IMR-90 (cell line): ENCODE measurements at regions of chr20 and their contacts with region 1.

Region 1: DNA sequence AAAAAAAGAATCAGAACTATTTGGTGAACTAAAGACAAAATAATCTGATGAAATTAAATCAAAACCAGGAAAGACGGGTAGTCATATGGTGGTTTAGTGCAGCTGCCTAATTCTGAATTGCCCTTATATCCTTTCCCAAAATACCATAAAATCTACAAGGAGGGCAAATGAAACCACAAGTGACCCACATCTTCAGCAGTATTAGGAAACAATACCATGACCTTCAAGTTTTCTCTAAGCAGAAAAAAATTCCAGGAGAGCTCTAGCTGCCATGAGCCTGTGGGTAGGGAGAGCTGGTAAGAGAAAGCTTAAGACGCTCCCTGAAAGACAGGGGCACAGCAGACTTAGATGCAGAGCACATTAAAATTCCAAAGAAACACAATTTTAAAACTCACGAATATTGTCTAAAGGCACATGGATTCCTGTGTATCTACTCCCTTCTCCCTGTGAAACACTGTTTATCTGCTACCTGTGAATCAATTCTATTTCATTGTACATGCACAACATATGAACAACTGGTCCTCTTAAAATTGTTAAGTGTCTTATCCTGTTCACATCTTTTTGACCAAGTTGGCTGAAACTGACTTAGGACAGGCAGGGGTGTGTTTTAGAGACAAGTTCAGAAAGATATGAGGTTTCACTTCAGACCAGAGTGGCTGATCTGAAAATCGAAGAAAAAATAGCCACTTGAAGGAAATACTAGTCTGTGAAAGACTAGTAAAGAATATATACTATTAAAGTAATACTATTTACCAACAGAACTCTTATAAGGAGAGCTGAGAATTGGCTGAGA is 153.6 kb upstream of the SHLD1 start:
- DNase-seq: no peak
- ATAC-seq: no peak
- H3K4me3 ChIP-seq: no peak overlapping the region
- H3K27ac ChIP-seq: no peak overlapping the region
- H3K4me1 ChIP-seq: peaks cover 5% of the 10 kb centered on the region
- H3K27me3 ChIP-seq: no peaks in the 10 kb centered on the region
- CTCF ChIP-seq: no peak
- POLR2A ChIP-seq: no peak
- RAD21 ChIP-seq: no peak

Region 2: GRCh38 chr20:5529331-5530148 is 67.1 kb before region 1 on chr20:
- CTCF ChIA-PET with region 1: no interaction called
- POLR2A ChIA-PET with region 1: no interaction called
- dilution Hi-C with region 1: no loop called
- in situ Hi-C with region 1: no loop called
- intact Hi-C with region 1: no loop called
- DNase-seq: peak; percentile 56
- ATAC-seq: peak; percentile 86
- H3K4me3 ChIP-seq: no peak overlapping the region
- H3K27ac ChIP-seq: no peak overlapping the region
- H3K4me1 ChIP-seq: peaks cover 2% of the 10 kb centered on the region
- H3K27me3 ChIP-seq: no peaks in the 10 kb centered on the region
- CTCF ChIP-seq: peak; percentile 82
- POLR2A ChIP-seq: no peak
- RAD21 ChIP-seq: peak; percentile 83

Region 3: GRCh38 chr20:5557123-5557522 is 39.5 kb before region 1 on chr20:
- CTCF ChIA-PET with region 1: no interaction called
- POLR2A ChIA-PET with region 1: no interaction called
- dilution Hi-C with region 1: no loop called
- in situ Hi-C with region 1: no loop called
- intact Hi-C with region 1: loop called (anchors 5 kb)
- DNase-seq: peak; percentile 47
- ATAC-seq: peak; percentile 84
- H3K4me3 ChIP-seq: no peak overlapping the region
- H3K27ac ChIP-seq: no peak overlapping the region
- H3K4me1 ChIP-seq: no peaks in the 10 kb centered on the region
- H3K27me3 ChIP-seq: no peaks in the 10 kb centered on the region
- CTCF ChIP-seq: peak; percentile 59
- POLR2A ChIP-seq: no peak
- RAD21 ChIP-seq: peak; percentile 71

Region 4: DNA sequence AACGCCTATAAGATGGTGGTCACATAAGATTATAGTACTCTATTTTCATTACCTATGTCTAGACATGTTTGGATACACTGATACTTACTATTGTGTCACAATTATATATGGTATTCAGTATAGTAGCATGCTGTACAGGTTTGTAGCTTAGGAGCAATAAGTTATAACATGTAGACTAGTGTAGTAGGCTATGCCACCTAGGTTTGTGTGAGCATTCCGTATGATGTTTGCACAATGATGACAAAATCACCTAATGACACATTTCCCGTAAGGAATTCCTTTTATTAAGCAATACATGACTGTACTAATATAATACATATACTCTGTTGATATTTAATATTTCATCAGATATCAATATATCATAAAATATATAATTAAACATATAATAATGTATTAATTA is 1711.6 kb after region 1 on chr20:
- CTCF ChIA-PET with region 1: no interaction called
- POLR2A ChIA-PET with region 1: no interaction called
- dilution Hi-C with region 1: no loop called
- in situ Hi-C with region 1: no loop called
- intact Hi-C with region 1: no loop called
- DNase-seq: no peak
- ATAC-seq: no peak
- H3K4me3 ChIP-seq: no peak overlapping the region
- H3K27ac ChIP-seq: no peak overlapping the region
- H3K4me1 ChIP-seq: no peaks in the 10 kb centered on the region
- H3K27me3 ChIP-seq: no peaks in the 10 kb centered on the region
- CTCF ChIP-seq: no peak
- POLR2A ChIP-seq: no peak
- RAD21 ChIP-seq: no peak